IMR-90 (cell line): ENCODE measurements at regions of chr6 and their contacts with region 1.

Region 1: GRCh38 chr6:28863604-28864320 is 60.0 kb downstream of the TRIM27 start:
- DNase-seq: peak; percentile 82
- ATAC-seq: peak; percentile 86
- H3K4me3 ChIP-seq: peak overlapping the region; percentile 87
- H3K27ac ChIP-seq: no peak overlapping the region
- H3K4me1 ChIP-seq: 0 out of 2 replicates have a peak, but pooled peaks cover 2% of the 10 kb centered on the region
- H3K27me3 ChIP-seq: no peaks in the 10 kb centered on the region
- CTCF ChIP-seq: no peak
- POLR2A ChIP-seq: no peak
- RAD21 ChIP-seq: no peak

Region 2: DNA sequence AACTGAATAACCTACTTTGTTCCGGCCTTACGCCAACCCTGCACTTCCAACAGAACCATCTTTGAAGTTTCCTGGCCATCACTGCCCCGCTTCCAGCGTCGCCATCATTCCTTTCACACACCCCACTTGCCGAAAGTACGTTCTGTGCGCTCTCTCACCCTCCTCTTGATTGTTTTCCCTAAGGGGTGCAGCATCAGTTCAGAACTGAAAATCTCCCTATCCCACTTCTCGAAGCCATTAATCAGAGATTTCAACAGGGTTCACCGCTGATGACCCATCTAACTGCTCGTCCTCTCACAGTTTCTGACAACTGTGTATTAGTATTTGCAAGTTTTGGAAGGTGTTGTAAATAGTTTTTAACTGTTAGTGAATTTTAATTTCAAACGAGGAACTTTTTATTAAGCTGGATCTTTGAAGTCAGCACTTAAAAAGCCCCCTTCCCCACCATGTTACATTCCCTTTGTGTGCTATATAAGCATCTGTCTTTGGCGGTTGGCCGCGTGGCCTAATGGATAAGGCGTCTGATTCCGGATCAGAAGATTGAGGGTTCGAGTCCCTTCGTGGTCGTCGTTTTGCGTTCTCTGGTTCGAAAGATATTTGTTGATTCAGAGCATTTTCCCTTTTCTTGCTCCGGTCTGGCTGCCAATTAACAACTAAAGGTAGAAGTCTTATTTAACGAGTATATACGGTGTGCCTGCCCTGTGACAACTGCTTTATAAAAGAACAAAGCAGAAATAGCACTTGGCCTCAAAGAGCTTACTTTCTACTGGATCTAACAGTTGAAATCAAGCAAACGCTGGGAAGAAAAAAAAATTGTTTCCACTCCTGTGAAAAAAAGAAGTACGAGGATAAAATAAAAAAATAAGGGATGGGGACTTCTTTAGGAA is 17.4 kb after region 1 on chr6:
- CTCF ChIA-PET with region 1: interaction called, 6 read pairs
- POLR2A ChIA-PET with region 1: no interaction called
- dilution Hi-C with region 1: no loop called
- in situ Hi-C with region 1: no loop called
- intact Hi-C with region 1: loop called (anchors 1 kb)
- DNase-seq: peak; percentile 75
- ATAC-seq: peak; percentile 98
- H3K4me3 ChIP-seq: peak overlapping the region; percentile 81
- H3K27ac ChIP-seq: 0 out of 2 replicates have a peak overlapping the region, but pooled peaks have one; percentile 23
- H3K4me1 ChIP-seq: no peaks in the 10 kb centered on the region
- H3K27me3 ChIP-seq: peaks cover 3% of the 10 kb centered on the region; the same call in 1 of the 2 replicates
- CTCF ChIP-seq: no peak
- POLR2A ChIP-seq: no peak
- RAD21 ChIP-seq: no peak

Region 3: GRCh38 chr6:28981833-28982475 is 118.2 kb after region 1 on chr6:
- CTCF ChIA-PET with region 1: no interaction called
- POLR2A ChIA-PET with region 1: no interaction called
- dilution Hi-C with region 1: no loop called
- in situ Hi-C with region 1: no loop called
- intact Hi-C with region 1: no loop called
- DNase-seq: peak; percentile 87
- ATAC-seq: peak; percentile 65
- H3K4me3 ChIP-seq: peak overlapping the region; percentile 58
- H3K27ac ChIP-seq: no peak overlapping the region
- H3K4me1 ChIP-seq: peaks cover 2% of the 10 kb centered on the region; the same call in 1 of the 2 replicates
- H3K27me3 ChIP-seq: no peaks in the 10 kb centered on the region; the same call in 1 of the 2 replicates
- CTCF ChIP-seq: no peak
- POLR2A ChIP-seq: no peak
- RAD21 ChIP-seq: no peak